ENCODE measurements at regions of chr22 and their contacts with region 1.

Region 1: DNA sequence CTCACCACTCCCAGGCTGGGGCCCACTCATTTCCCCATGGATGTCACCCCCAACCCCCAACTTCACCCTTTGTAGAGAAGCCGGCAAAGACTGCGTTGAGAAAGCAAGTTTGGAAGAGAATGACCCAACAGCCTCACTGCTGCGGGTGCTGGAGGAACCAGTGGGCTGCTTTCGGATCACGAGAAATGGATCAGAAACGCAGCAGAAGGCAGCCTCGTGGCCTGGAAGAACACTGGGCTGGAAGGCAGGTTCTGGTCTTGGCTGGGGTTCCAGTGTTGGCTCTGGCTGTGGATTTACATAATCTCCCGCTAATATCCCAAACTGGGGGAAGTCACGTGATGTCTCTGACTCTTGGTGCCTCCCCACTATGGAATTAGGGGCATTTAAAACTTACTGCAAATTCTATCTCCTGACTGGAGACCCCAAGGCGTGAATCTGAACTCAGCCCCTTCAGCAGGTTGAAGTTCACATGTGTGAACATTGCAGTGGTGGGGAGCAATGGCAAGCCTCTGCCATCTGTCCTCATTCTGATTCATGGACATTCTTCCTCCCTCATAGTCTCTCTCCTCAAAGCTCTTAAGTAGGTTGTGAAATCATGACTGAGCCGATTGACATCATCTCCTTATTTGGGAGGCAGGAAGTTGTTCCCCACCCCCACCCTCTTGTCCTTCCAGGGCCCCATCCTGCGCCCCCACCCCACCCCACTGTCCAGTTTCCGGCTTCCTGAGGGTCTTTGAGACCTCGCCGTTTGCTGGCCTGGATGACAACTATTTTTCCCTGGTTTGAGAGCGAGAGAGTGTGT is 37.0 kb upstream of the TIMP3 start:
- DNase-seq: peak in 1 of 2 experiments; percentile 79
- H3K4me3 ChIP-seq: no peak overlapping the region
- H3K27ac ChIP-seq: peak overlapping the region; percentile 52
- H3K4me1 ChIP-seq: peaks cover 53% of the 10 kb centered on the region
- H3K27me3 ChIP-seq: no peaks in the 10 kb centered on the region
- CTCF ChIP-seq: no peak

Region 2: DNA sequence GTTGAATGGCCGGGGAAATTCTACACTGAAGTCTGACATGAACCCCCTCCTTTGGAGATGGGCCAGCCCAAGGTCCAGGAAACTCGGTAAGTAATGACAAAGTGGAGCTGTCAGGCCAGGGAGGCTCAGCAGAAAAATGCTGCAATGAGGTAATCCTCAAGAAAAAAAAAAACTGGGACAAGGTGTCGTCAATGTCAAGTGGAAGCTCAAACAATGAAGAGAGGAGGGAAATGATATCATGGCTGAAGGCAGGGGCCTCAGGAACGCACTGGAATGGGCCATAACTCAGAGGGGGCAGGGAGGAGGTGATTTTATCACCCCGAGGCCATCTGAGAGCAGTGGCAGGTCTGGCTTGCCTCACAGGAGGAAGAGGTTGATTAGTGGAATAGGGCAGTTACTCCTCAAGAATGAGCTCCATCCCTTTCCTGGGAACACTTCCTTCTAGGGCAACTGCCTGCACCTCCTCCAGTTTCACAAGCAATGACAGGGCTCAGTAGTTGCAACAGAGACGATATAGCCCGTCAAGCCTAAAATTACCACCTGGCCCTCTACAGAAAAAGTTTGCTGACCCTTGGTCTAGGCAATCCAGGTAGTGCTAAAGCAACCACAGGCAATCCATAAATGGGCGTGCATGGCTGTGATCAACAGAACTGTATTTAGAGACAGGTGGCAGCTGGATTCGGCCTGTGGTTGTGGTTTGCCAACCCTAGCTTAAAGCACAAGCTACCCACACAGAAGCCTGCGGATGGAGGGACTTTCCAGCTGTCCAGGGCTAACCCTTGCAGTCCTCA is 224.7 kb before region 1 on chr22:
- CTCF ChIA-PET with region 1: interaction called, 4 read pairs
- POLR2A ChIA-PET with region 1: no interaction called
- intact Hi-C with region 1: loop called (anchors 1 kb)
- DNase-seq: peak; percentile 72 to 97
- H3K4me3 ChIP-seq: no peak overlapping the region
- H3K27ac ChIP-seq: peak overlapping the region; percentile 74
- H3K4me1 ChIP-seq: peaks cover 29% of the 10 kb centered on the region
- H3K27me3 ChIP-seq: no peaks in the 10 kb centered on the region
- CTCF ChIP-seq: no peak

Region 3: GRCh38 chr22:32603656-32604435 is 160.7 kb before region 1 on chr22:
- CTCF ChIA-PET with region 1: no interaction called
- POLR2A ChIA-PET with region 1: interaction called, 12 read pairs
- intact Hi-C with region 1: no loop called
- DNase-seq: no peak
- H3K4me3 ChIP-seq: no peak overlapping the region
- H3K27ac ChIP-seq: no peak overlapping the region; the same call in 1 of the 2 replicates
- H3K4me1 ChIP-seq: peaks cover 24% of the 10 kb centered on the region
- H3K27me3 ChIP-seq: no peaks in the 10 kb centered on the region
- CTCF ChIP-seq: no peak

Region 4: DNA sequence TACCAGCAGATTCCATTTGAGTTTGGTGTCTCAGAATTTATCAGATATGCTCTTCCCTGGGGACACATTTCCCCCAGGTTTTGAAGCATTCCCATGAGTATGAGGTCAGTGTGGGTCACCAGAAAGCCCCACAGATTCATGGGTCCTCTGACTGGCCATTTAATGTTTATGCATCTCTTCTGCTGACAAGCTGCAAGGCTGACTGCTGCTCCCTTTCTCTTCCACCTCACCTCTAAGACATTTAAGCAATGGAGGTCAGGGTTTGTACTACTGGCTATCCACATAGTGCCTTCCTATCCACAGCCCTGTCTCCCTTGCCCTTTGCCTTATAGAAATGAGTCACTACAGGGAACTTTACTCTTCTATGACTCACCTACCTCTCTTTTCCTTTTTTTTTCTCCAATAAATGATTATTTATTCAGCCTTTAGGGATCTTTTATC is 69.1 kb before region 1 on chr22:
- CTCF ChIA-PET with region 1: no interaction called
- POLR2A ChIA-PET with region 1: no interaction called
- intact Hi-C with region 1: loop called (anchors 1 kb)
- DNase-seq: peak; percentile 73 to 99
- H3K4me3 ChIP-seq: no peak overlapping the region; the same call in 1 of the 2 replicates
- H3K27ac ChIP-seq: peak overlapping the region; percentile 94
- H3K4me1 ChIP-seq: peaks cover 78% of the 10 kb centered on the region
- H3K27me3 ChIP-seq: no peaks in the 10 kb centered on the region
- CTCF ChIP-seq: no peak

Region 5: DNA sequence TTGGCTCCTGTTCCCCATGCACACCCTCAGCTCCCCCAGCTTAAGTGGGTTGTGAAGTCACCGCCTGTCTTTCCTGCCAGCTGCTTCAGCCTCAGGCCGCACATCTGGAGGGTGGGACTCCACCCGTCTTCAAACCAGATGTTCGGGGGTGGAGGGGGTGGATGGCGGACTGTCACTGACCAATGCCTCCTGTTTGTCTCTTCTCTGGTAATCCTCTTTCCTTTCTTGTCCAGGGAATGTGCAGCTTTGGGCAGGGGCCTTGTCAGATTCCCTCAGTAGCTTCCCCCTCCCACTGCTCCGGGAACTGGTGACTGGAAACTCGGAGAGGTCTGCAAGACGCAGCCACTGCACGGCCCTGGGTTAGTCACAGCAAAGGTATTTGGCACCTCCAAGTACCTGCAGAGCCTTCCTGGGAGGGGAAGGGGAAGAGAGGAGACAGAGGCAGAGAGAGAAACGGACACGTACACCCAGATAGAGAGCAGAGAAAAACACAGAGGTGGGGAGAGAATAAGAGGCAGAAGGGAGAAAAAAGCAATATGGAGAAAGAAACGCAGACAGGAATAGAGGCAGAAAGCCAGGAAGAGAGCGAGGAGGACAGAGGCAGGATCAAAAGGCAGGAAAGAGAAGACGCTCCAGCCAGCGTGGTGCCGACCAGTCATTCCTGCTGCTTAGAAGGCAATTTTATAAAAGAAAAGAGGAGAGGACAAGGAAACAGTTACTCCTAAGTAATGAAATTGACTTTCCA is 19.1 kb before region 1 on chr22:
- CTCF ChIA-PET with region 1: no interaction called
- POLR2A ChIA-PET with region 1: interaction called, 4 read pairs
- intact Hi-C with region 1: loop called (anchors 1 kb)
- DNase-seq: peak; percentile 82 to 95
- H3K4me3 ChIP-seq: peak overlapping the region; percentile 38; the same call in 1 of the 2 replicates
- H3K27ac ChIP-seq: peak overlapping the region; percentile 95
- H3K4me1 ChIP-seq: peaks cover 40% of the 10 kb centered on the region
- H3K27me3 ChIP-seq: no peaks in the 10 kb centered on the region
- CTCF ChIP-seq: no peak

Region 6: GRCh38 chr22:32781695-32782094 is 17.2 kb after region 1 on chr22:
- CTCF ChIA-PET with region 1: interaction called, 8 read pairs
- POLR2A ChIA-PET with region 1: no interaction called
- intact Hi-C with region 1: loop called (anchors 1 kb)
- DNase-seq: no peak
- H3K4me3 ChIP-seq: no peak overlapping the region
- H3K27ac ChIP-seq: no peak overlapping the region
- H3K4me1 ChIP-seq: peaks cover 47% of the 10 kb centered on the region
- H3K27me3 ChIP-seq: no peaks in the 10 kb centered on the region
- CTCF ChIP-seq: no peak

Region 7: DNA sequence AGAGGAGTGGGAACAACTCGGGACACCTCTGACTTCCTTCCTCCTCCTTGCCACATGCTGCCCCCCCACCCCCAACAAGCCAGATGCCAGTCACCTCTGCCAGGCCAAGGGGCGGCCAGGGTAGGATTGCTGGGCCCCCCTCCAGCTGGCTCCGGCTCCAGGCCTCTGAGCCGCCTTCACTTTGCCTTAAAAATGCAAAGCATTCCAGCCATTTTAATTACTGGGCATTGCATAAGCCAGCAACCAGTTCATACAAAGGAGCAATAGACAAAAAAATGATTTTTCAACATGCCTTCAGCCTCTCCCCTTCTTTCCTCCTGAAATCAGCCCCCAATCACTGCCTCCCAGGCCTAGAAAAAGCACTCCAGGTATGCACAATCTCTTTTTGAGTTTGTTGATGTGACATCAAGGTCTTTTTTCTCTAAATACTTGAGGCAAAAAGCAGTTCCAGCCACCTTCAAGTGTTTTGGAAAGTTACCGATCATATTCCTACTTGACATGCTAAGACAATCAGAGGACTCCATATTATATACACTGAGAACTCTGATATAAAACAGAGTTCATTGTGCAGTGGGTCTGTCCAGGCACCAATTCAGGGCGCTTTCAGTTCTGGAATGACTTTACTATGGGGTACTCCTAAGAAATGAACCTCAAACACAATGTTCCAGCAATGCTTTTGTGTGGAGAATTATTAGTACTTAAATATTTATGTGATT is 24.5 kb after region 1 on chr22:
- CTCF ChIA-PET with region 1: no interaction called
- POLR2A ChIA-PET with region 1: interaction called, 3 read pairs
- intact Hi-C with region 1: loop called (anchors 2 kb)
- DNase-seq: peak; percentile 71 to 88
- H3K4me3 ChIP-seq: no peak overlapping the region
- H3K27ac ChIP-seq: peak overlapping the region; percentile 92
- H3K4me1 ChIP-seq: peaks cover 29% of the 10 kb centered on the region
- H3K27me3 ChIP-seq: no peaks in the 10 kb centered on the region
- CTCF ChIP-seq: no peak

Region 8: GRCh38 chr22:33012833-33013450 is 248.4 kb after region 1 on chr22:
- CTCF ChIA-PET with region 1: no interaction called
- POLR2A ChIA-PET with region 1: no interaction called
- intact Hi-C with region 1: no loop called
- DNase-seq: no peak
- H3K4me3 ChIP-seq: no peak overlapping the region
- H3K27ac ChIP-seq: no peak overlapping the region
- H3K4me1 ChIP-seq: no peaks in the 10 kb centered on the region
- H3K27me3 ChIP-seq: peaks cover 18% of the 10 kb centered on the region; the same call in 1 of the 2 replicates
- CTCF ChIP-seq: peak; percentile 31; the same call in 1 of the 2 replicates

Region 9: DNA sequence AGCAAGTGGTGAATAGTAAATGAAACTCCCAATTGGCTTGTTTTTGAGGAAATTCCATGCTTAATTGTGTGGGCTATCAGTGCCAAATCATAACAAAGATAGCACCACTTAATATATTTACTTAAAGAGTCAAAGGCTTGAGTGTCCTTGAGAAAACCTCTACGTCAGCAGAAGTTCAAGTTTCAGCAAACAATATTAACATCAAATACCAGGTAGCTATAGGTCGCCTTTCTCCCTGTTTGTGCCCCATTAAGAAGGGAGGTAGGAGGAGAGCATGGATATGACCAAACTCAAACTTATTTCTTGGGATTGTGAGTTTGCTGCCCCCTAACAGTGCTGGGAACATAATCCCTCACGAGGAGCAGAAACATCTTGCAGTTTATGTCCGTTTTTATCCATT is 399.3 kb after region 1 on chr22:
- CTCF ChIA-PET with region 1: no interaction called
- POLR2A ChIA-PET with region 1: no interaction called
- intact Hi-C with region 1: no loop called
- DNase-seq: no peak
- H3K4me3 ChIP-seq: no peak overlapping the region
- H3K27ac ChIP-seq: no peak overlapping the region
- H3K4me1 ChIP-seq: no peaks in the 10 kb centered on the region
- H3K27me3 ChIP-seq: peaks cover 86% of the 10 kb centered on the region
- CTCF ChIP-seq: no peak